Endothelial cell of umbilical vein (primary cell): ENCODE measurements at regions of chr13 and their contacts with region 1.

Region 1: GRCh38 chr13:27620377-27621115 is at the start of gene LNX2:
- DNase-seq: peak; percentile 97
- H3K4me3 ChIP-seq: peak within 1 kb of the TSS; percentile 65 to 90 (median 90)
- H3K27ac ChIP-seq: peak within 1 kb of the TSS; percentile 75
- H3K4me1 ChIP-seq: peaks cover 17% of the 10 kb centered on the region
- H3K27me3 ChIP-seq: no peaks in the 10 kb centered on the region
- CTCF ChIP-seq: no peak
- POLR2A ChIP-seq: peak; percentile 22
- total RNA-seq, gene LNX2: 9.1 and 9.9 TPM in 2 replicates

Region 2: GRCh38 chr13:26985285-26985878 is 635.2 kb before region 1 on chr13:
- CTCF ChIA-PET with region 1: no interaction called
- POLR2A ChIA-PET with region 1: no interaction called
- dilution Hi-C with region 1: no loop called
- intact Hi-C with region 1: no loop called
- DNase-seq: peak; percentile 77
- H3K4me3 ChIP-seq: no peak overlapping the region
- H3K27ac ChIP-seq: no peak overlapping the region
- H3K4me1 ChIP-seq: peaks cover 4% of the 10 kb centered on the region
- H3K27me3 ChIP-seq: peaks cover 2 to 4% of the 10 kb centered on the region in 2 experiments
- CTCF ChIP-seq: peak; percentile 63 to 74
- POLR2A ChIP-seq: no peak

Region 3: DNA sequence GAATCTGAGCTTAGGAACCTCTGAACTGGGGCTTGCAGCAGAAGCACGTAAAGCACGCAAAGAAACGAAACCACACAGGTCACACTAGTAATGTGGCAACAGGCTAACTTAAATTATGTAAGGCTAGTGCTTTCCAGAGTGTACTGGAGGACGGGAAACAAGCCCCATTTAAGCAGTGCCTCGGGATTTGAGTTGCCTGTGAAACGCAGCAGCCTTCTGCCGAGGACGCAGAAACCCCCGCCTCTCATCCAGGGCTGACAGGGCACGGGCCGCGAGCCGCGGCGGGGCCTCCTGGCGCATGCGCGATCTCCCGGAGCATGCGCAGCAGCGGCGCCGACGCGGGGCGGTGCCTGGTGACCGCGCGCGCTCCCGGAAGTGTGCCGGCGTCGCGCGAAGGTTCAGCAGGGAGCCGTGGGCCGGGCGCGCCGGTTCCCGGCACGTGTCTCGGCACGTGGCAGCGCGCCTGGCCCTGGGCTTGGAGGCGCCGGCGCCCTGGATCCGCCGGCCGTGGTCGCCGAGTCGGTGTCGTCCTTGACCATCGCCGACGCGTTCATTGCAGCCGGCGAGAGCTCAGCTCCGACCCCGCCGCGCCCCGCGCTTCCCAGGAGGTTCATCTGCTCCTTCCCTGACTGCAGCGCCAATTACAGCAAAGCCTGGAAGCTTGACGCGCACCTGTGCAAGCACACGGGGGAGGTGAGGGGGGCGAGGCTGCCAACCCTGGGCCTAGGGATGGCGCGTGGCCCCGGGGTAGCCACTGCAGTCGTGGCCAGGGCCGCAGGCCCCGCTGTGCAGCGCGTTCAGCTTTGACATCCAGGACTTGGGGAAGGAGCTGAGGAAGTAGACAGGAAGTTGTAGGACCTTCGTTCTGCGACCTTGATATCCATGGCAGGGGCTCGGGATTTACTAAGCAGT is 196.0 kb before region 1 on chr13 and contains the start of gene GTF3A:
- CTCF ChIA-PET with region 1: no interaction called
- POLR2A ChIA-PET with region 1: no interaction called
- dilution Hi-C with region 1: no loop called
- intact Hi-C with region 1: loop called (anchors 1 kb)
- DNase-seq: peak; percentile 91
- H3K4me3 ChIP-seq: peak within 1 kb of the TSS; percentile 23 to 66 (median 57)
- H3K27ac ChIP-seq: peak within 1 kb of the TSS; percentile 69
- H3K4me1 ChIP-seq: peaks cover 25% of the 10 kb centered on the region
- H3K27me3 ChIP-seq: no peaks in the 10 kb centered on the region
- CTCF ChIP-seq: no peak
- POLR2A ChIP-seq: peak; percentile 89
- total RNA-seq, gene GTF3A: 71.2 and 73.3 TPM in 2 replicates

Region 4: GRCh38 chr13:27533155-27533643 is 87.3 kb before region 1 on chr13:
- CTCF ChIA-PET with region 1: interaction called, 45 read pairs
- POLR2A ChIA-PET with region 1: no interaction called
- dilution Hi-C with region 1: no loop called
- intact Hi-C with region 1: loop called (anchors 1 kb)
- DNase-seq: peak; percentile 69
- H3K4me3 ChIP-seq: no peak overlapping the region
- H3K27ac ChIP-seq: no peak overlapping the region
- H3K4me1 ChIP-seq: no peaks in the 10 kb centered on the region
- H3K27me3 ChIP-seq: no peaks in the 10 kb centered on the region
- CTCF ChIP-seq: peak; percentile 95 to 99
- POLR2A ChIP-seq: no peak

Region 5: DNA sequence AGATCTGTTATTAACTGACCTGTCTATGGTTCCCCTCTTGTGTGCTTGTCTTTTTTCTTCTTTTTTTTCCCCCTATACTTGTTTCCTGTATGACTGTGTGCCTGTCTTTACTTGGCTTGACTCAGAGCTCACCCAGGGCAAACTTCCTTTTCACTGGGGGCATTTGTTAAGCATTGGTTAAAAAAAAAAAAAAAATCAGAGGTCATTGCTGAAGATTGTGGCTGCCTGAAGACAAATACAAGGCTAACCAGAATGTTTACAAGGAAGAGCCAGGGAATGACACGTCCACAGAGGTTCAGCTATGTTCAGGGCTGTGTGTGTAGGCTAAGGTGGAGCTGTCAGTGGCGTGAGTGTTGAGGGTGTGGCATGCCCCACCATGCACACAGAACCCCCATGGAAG is 47.3 kb before region 1 on chr13:
- CTCF ChIA-PET with region 1: interaction called, 17 read pairs
- POLR2A ChIA-PET with region 1: no interaction called
- dilution Hi-C with region 1: no loop called
- intact Hi-C with region 1: loop called (anchors 2 kb)
- DNase-seq: peak; percentile 73
- H3K4me3 ChIP-seq: no peak overlapping the region
- H3K27ac ChIP-seq: peak overlapping the region; percentile 50
- H3K4me1 ChIP-seq: peaks cover 28% of the 10 kb centered on the region
- H3K27me3 ChIP-seq: no peaks in the 10 kb centered on the region
- CTCF ChIP-seq: no peak
- POLR2A ChIP-seq: no peak

Region 6: GRCh38 chr13:27607125-27607524 is 13.4 kb before region 1 on chr13:
- CTCF ChIA-PET with region 1: interaction called, 27 read pairs
- POLR2A ChIA-PET with region 1: no interaction called
- dilution Hi-C with region 1: no loop called
- intact Hi-C with region 1: loop called (anchors 1 kb)
- DNase-seq: peak; percentile 85
- H3K4me3 ChIP-seq: no peak overlapping the region
- H3K27ac ChIP-seq: peak overlapping the region; percentile 39
- H3K4me1 ChIP-seq: peaks cover 16% of the 10 kb centered on the region
- H3K27me3 ChIP-seq: no peaks in the 10 kb centered on the region
- CTCF ChIP-seq: no peak
- POLR2A ChIP-seq: no peak